ENCODE measurements at regions of chr17 and their contacts with region 1.

Region 1: DNA sequence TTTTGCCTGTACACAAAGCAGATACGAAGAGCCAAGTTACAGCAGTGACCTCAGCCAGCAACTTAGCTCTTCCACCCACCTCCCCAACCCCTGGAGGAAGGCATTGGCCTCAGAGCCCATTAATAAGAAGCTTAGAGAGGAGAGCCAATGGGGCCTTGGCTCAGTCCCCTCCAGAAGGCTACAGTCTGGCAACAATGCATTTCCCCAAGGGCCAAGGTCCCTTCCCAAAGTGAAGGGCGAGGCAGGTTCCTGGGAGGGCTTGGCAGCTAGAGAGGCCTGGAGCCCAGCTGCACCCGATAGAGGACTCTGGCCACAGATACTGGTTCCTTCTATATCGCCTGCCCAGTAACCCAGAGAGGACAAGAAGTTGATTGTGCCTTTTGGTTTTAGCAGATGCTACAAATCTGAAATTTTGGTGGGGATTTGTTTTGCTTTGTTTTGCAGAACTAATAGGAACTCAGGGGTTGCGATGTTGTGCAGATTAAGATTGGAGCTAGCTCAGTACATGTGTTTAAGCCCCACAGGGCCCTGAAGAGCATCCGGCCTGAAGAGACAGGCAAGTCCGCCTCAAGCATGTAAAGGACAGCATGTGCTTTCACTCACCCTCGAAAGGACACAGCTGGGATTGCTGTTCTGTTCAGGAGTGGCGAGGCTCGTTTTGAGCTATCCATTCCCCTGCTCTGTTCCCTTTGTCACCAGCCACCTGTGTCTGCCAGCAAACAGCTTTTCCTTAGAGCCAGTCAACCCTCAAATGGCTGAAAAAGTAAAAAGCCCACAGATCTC is 12.0 kb upstream of the PNPO start:
- DNase-seq: no peak
- H3K4me3 ChIP-seq: no peak overlapping the region
- H3K4me3 Mint-ChIP-seq: no peak overlapping the region
- H3K27ac Mint-ChIP-seq: no peak overlapping the region
- H3K4me1 ChIP-seq: no peaks in the 10 kb centered on the region
- H3K4me1 Mint-ChIP-seq: no peaks in the 10 kb centered on the region
- H3K27me3 ChIP-seq: no peaks in the 10 kb centered on the region
- H3K27me3 Mint-ChIP-seq: no peaks in the 10 kb centered on the region
- CTCF ChIP-seq: no peak

Region 2: GRCh38 chr17:47810205-47810821 is 119.1 kb before region 1 on chr17:
- CTCF ChIA-PET with region 1: no interaction called
- POLR2A ChIA-PET with region 1: no interaction called
- intact Hi-C with region 1: no loop called
- DNase-seq: peak; percentile 100
- H3K4me3 ChIP-seq: no peak overlapping the region
- H3K4me3 Mint-ChIP-seq: peak overlapping the region; percentile 56
- H3K27ac Mint-ChIP-seq: peak overlapping the region; percentile 93
- H3K4me1 ChIP-seq: peaks cover 36% of the 10 kb centered on the region
- H3K4me1 Mint-ChIP-seq: peaks cover 36% of the 10 kb centered on the region
- H3K27me3 ChIP-seq: no peaks in the 10 kb centered on the region
- H3K27me3 Mint-ChIP-seq: no peaks in the 10 kb centered on the region
- CTCF ChIP-seq: no peak

Region 3: DNA sequence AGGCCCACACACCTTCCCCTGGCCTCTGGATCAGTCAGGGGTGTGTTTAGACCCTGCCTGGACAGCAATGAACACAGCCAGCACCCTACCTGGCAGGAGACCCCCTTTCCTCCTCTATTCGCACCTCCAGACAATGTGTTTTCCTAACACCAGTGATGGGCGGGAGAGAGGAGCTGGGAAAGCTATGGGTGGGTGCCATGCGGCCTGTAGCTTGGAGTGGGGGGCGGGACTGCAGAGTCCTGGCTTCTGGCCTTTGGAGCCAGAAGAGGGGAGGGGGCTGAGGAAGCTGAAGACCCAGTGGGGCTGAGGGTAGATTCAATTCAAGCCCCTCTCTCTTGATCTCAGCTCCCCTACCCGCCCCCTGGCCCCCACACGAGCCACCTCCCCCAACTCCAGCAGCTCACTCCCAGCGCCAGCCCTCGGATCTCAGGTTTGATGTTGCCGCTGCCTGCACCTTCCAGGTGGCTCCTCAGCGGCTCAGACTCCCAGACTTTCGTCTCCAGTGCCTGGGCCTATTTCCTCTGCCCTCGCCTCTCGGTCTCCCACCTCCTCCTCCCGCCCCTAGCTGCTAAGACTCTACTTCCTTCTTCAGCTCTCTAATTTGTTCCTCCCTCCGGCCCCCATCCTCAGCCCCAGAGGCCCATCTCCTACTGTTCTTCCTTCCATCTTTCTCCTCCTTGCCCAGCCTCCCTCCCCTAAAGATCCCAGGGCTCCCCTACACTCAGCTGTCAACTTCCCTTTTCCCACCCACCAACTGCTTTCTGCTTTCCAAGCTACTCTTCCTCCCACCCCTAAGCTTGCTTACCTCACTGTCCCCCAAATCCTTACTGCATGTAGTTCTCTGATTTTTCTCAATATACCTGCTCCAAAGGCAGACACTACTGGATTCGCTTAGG is 71.6 kb before region 1 on chr17:
- CTCF ChIA-PET with region 1: no interaction called
- POLR2A ChIA-PET with region 1: interaction called, 11 read pairs
- intact Hi-C with region 1: no loop called
- DNase-seq: no peak
- H3K4me3 ChIP-seq: no peak overlapping the region
- H3K4me3 Mint-ChIP-seq: no peak overlapping the region
- H3K27ac Mint-ChIP-seq: no peak overlapping the region
- H3K4me1 ChIP-seq: peaks cover 4% of the 10 kb centered on the region
- H3K4me1 Mint-ChIP-seq: no peaks in the 10 kb centered on the region
- H3K27me3 ChIP-seq: no peaks in the 10 kb centered on the region
- H3K27me3 Mint-ChIP-seq: peaks cover 12% of the 10 kb centered on the region
- CTCF ChIP-seq: no peak

Region 4: DNA sequence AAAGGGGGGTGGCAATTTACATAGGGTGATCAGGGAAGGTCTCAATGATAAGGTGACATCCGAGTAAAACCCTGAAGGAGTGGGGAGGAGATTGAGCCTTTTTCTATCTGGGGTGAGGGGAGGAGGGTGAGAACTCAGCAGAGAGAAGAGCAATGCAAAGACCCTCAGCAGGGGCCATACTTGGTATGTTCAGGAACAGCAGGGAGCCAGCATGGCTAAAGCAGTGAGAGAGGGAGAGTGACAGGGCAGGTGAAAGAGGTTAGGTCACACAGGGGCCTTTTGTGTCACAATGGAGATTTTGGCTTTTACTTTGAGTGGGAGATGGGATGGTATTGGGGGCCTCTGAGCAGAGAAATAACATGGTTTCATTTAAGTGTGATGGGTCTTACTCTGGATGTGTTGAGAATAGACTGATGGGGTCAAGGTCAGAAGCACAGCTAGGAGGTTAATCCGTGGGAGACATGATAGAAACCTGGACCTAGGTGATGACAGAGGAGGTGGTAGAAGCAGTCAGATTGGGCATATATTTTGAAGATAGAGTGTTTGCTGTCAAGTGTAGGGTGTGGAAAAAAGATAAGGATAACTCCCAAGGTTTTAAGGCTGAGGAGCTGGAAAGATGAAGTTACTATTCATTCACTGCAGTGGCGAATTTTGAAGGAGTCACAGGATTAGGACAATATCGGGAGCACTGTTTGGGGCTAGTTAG is 27.2 kb before region 1 on chr17:
- CTCF ChIA-PET with region 1: no interaction called
- POLR2A ChIA-PET with region 1: no interaction called
- intact Hi-C with region 1: no loop called
- DNase-seq: no peak
- H3K4me3 ChIP-seq: no peak overlapping the region
- H3K4me3 Mint-ChIP-seq: no peak overlapping the region
- H3K27ac Mint-ChIP-seq: no peak overlapping the region
- H3K4me1 ChIP-seq: peaks cover 4% of the 10 kb centered on the region
- H3K4me1 Mint-ChIP-seq: peaks cover 4% of the 10 kb centered on the region
- H3K27me3 ChIP-seq: no peaks in the 10 kb centered on the region
- H3K27me3 Mint-ChIP-seq: no peaks in the 10 kb centered on the region
- CTCF ChIP-seq: no peak